ENCODE measurements at regions of chr2 and their contacts with region 1.

Region 1: GRCh38 chr2:239979243-239980023 is 45.7 kb downstream of the NDUFA10 start:
- DNase-seq: no peak
- H3K4me3 ChIP-seq: no peak overlapping the region
- H3K27ac ChIP-seq: no peak overlapping the region
- H3K4me1 ChIP-seq: no peaks in the 10 kb centered on the region
- H3K27me3 ChIP-seq: no peaks in the 10 kb centered on the region
- CTCF ChIP-seq: peak in 2 of 4 experiments; percentile 28 to 46
- POLR2A ChIP-seq: no peak

Region 2: GRCh38 chr2:239934571-239935171 is 44.8 kb before region 1 on chr2:
- intact Hi-C with region 1: loop called (anchors 1 kb)
- DNase-seq: peak; percentile 64
- H3K4me3 ChIP-seq: no peak overlapping the region
- H3K27ac ChIP-seq: no peak overlapping the region
- H3K4me1 ChIP-seq: no peaks in the 10 kb centered on the region
- H3K27me3 ChIP-seq: no peaks in the 10 kb centered on the region
- CTCF ChIP-seq: peak; percentile 47 to 83 (median 67)
- POLR2A ChIP-seq: no peak

Region 3: GRCh38 chr2:239944694-239945551 is 34.5 kb before region 1 on chr2:
- intact Hi-C with region 1: loop called (anchors 5 kb)
- DNase-seq: no peak
- H3K4me3 ChIP-seq: no peak overlapping the region
- H3K27ac ChIP-seq: no peak overlapping the region
- H3K4me1 ChIP-seq: peaks cover 2% of the 10 kb centered on the region
- H3K27me3 ChIP-seq: no peaks in the 10 kb centered on the region
- CTCF ChIP-seq: no peak
- POLR2A ChIP-seq: no peak

Region 4: DNA sequence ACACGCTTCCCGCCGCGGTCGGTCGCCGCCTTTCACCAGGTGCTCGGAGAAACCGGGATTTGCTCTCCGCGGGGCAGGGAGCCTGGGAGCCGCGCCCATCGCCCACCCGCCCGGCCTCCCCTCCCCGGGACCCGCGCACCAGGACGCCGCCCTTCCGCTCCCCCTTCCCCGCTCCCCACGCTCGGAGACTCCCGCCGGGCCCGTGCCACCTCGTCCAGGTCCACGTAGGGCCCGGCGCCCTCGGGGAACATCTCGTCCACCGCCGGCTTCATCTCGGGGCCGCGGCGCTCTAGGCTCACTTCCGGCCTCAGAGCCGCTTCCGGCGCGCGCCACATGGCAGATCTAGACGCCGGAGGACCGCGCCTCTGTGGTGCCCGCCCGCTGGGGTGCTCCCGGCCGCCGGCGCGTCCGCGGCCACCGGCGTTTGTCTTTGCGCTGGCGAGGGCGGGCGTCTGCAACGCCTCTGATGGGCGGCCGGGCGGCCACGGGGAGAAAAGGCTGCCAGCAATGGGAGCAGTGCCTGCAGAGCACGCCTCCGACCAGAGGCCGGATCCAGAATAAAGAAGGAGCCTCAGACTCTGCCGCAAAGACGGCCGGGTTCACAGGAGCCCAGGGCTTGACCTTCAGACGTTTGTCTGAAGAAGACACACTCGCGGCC is 156.7 kb after region 1 on chr2 and contains the start of gene COPS9:
- intact Hi-C with region 1: no loop called
- DNase-seq: peak; percentile 77
- H3K4me3 ChIP-seq: peak within 1 kb of the TSS; percentile 82 to 92
- H3K27ac ChIP-seq: peak within 1 kb of the TSS; percentile 38 to 55
- H3K4me1 ChIP-seq: peaks cover 6% of the 10 kb centered on the region
- H3K27me3 ChIP-seq: no peaks in the 10 kb centered on the region
- CTCF ChIP-seq: peak in 2 of 4 experiments; percentile 5 to 22
- POLR2A ChIP-seq: no peak
- total RNA-seq, gene COPS9: 156 to 179 TPM

Measured in prostate gland (tissue), 2 donors.